ENCODE measurements at regions of chr15 and their contacts with region 1.

Region 1: DNA sequence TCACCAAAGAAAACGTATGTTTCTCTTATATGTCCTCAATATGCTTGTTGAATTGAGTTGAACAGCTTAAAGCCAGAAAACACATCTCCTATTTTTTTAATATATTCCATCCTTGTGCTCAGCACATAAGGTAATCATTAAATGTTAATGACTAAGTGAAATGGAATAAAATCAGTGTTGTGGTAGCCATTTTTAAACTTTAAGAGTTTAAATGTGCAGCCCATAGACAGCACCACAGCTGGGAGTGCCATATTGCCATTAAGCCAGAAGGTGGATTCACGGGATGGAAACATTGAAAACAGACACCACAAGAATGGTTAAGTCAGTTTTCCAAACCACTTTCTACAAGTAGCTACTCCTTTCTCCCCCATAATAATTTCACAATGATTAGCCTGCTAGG is 76.8 kb upstream of the C15orf61 start:
- DNase-seq: no peak
- H3K4me3 ChIP-seq: no peak overlapping the region
- H3K27me3 ChIP-seq: no peaks in the 10 kb centered on the region
- CTCF ChIP-seq: 0 out of 2 replicates have a peak, but pooled peaks have one; percentile 14

Region 2: GRCh38 chr15:66312144-66312543 is 1132.0 kb before region 1 on chr15:
- CTCF ChIA-PET with region 1: no interaction called
- POLR2A ChIA-PET with region 1: interaction called, 10 read pairs
- DNase-seq: no peak
- H3K4me3 ChIP-seq: no peak overlapping the region
- H3K27me3 ChIP-seq: no peaks in the 10 kb centered on the region
- CTCF ChIP-seq: no peak

Region 3: DNA sequence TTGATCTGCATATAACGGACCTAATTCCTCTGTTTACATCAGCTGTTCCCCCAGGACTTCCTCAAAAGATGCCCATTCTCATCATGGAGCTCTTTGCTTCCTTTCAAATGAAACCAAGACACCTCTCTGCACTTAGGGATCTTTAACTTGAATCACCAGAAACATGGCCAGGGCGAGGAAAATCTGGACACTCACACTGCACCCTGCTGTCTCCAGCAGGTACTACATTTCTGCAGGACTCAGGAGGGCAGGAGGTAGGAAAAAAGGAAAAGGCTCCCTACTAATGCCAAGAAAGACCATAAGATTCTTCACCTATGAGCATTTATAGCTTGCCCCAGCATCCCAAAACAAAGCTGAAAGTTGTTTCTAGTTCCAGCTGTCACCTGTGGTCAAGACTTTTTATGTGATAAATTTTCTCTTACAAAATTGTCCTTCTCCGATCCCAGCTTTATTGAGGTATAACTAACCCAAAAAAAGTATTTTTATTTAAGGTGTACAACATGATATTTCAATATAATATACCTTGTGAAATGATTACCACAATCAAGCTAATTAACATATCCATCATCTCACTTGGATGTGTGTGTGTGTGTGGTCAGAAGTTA is 10.5 kb before region 1 on chr15:
- CTCF ChIA-PET with region 1: interaction called, 15 read pairs
- POLR2A ChIA-PET with region 1: no interaction called
- DNase-seq: no peak
- H3K4me3 ChIP-seq: no peak overlapping the region
- H3K27me3 ChIP-seq: no peaks in the 10 kb centered on the region
- CTCF ChIP-seq: peak; percentile 82

Measured in BJ (cell line).